ENCODE measurements at regions of chr16 and their contacts with region 1.

Region 1: DNA sequence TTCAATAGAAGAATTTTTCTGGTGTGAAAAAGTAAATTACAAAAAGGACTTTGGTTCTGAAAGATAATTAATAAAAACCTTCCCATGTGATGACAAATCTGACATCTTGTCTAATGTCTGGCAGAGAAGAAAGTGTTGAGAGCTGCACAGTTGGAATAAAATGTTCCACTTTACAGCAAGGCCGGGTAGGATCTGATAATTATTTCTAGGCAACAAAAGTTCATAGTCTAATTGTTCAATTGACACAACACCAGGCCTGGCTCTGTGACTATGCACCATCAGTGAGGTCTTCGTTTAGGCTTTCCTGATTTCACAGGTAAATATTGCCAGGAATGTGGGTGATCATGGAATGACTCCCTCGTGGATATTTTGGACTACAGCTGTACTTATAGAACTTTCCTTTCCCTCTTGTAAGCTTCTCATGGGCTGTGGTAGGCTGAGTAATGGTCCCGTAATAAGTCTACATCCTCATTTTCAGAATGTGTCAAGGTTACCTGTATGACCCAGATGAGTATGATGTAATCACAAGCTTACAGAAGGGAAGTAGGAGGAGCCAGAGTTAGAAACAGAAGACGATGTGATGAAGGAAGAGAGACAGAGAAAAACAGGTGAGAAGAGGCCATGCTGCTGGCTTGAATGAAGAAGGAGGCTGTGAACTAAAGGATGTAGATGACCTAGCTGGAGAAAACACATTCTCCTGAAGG is 217.0 kb downstream of the CDH13 start:
- DNase-seq: no peak
- ATAC-seq: peak in 2 of 4 donors; percentile 27 to 38
- H3K4me3 ChIP-seq: no peak overlapping the region
- H3K27ac ChIP-seq: no peak overlapping the region
- H3K4me1 ChIP-seq: peaks cover 0 to 29% (median 4%) of the 10 kb centered on the region in 12 donors
- H3K27me3 ChIP-seq: no peaks in the 10 kb centered on the region
- CTCF ChIP-seq: no peak
- POLR2A ChIP-seq: no peak

Region 2: GRCh38 chr16:82761236-82761635 is 82.5 kb before region 1 on chr16:
- intact Hi-C with region 1: loop called in 1 of 10 experiments (anchors 5 kb)
- DNase-seq: peak; percentile 78 to 93 (median 86)
- ATAC-seq: peak; percentile 91 to 94 (median 92)
- H3K4me3 ChIP-seq: peak overlapping the region in 5 of 12 donors; percentile 12 to 40 (median 28)
- H3K27ac ChIP-seq: peak overlapping the region; percentile 32 to 80 (median 63)
- H3K4me1 ChIP-seq: peaks cover 0 to 40% (median 20%) of the 10 kb centered on the region in 12 donors
- H3K27me3 ChIP-seq: no peaks in the 10 kb centered on the region
- CTCF ChIP-seq: no peak
- POLR2A ChIP-seq: no peak

Measured in heart left ventricle (tissue), 16 donors.